Esophagus squamous epithelium (tissue), 5 donors: ENCODE measurements at regions of chr9 and their contacts with region 1.

Region 1: GRCh38 chr9:72823971-72824370 is 128.9 kb downstream of the ALDH1A1 start:
- DNase-seq: no peak
- H3K4me3 ChIP-seq: no peak overlapping the region
- H3K27ac ChIP-seq: peak overlapping the region in 1 of 4 donors; percentile 15
- H3K4me1 ChIP-seq: peaks cover 4 to 60% (median 19%) of the 10 kb centered on the region in 3 donors
- H3K27me3 ChIP-seq: no peaks in the 10 kb centered on the region
- CTCF ChIP-seq: no peak
- POLR2A ChIP-seq: no peak

Region 2: GRCh38 chr9:72292256-72292682 is 531.7 kb before region 1 on chr9:
- intact Hi-C with region 1: loop called (anchors 5 kb)
- DNase-seq: no peak
- H3K4me3 ChIP-seq: no peak overlapping the region
- H3K27ac ChIP-seq: peak overlapping the region in 2 of 4 donors; percentile 11 to 12
- H3K4me1 ChIP-seq: peaks cover 0 to 10% (median 7%) of the 10 kb centered on the region in 3 donors
- H3K27me3 ChIP-seq: no peaks in the 10 kb centered on the region
- CTCF ChIP-seq: peak in 5 of 6 experiments; percentile 36 to 69 (median 62)
- POLR2A ChIP-seq: no peak